Activated B cell treated with CpG ODN at 0.5 μM for 24 hours (primary cell): ENCODE measurements at regions of chr1 and their contacts with region 1.

Region 1: GRCh38 chr1:3618881-3619671 is 5.7 kb upstream of the TPRG1L start:
- DNase-seq: peak; percentile 51
- ATAC-seq: peak; percentile 96
- H3K4me3 Mint-ChIP-seq: peak overlapping the region; percentile 73
- H3K27ac Mint-ChIP-seq: no peak overlapping the region
- H3K4me1 Mint-ChIP-seq: peaks cover 38% of the 10 kb centered on the region
- H3K27me3 Mint-ChIP-seq: peaks cover under 1% of the 10 kb centered on the region
- CTCF ChIP-seq: no peak

Region 2: GRCh38 chr1:3453203-3453761 is 165.8 kb before region 1 on chr1:
- CTCF ChIA-PET with region 1: interaction called, 46 read pairs
- POLR2A ChIA-PET with region 1: interaction called, 5 read pairs
- intact Hi-C with region 1: loop called (anchors 1 kb)
- DNase-seq: peak; percentile 73
- ATAC-seq: peak; percentile 81
- H3K4me3 Mint-ChIP-seq: peak overlapping the region; percentile 41
- H3K27ac Mint-ChIP-seq: no peak overlapping the region
- H3K4me1 Mint-ChIP-seq: peaks cover 2% of the 10 kb centered on the region
- H3K27me3 Mint-ChIP-seq: peaks cover 19% of the 10 kb centered on the region
- CTCF ChIP-seq: peak; percentile 46

Region 3: DNA sequence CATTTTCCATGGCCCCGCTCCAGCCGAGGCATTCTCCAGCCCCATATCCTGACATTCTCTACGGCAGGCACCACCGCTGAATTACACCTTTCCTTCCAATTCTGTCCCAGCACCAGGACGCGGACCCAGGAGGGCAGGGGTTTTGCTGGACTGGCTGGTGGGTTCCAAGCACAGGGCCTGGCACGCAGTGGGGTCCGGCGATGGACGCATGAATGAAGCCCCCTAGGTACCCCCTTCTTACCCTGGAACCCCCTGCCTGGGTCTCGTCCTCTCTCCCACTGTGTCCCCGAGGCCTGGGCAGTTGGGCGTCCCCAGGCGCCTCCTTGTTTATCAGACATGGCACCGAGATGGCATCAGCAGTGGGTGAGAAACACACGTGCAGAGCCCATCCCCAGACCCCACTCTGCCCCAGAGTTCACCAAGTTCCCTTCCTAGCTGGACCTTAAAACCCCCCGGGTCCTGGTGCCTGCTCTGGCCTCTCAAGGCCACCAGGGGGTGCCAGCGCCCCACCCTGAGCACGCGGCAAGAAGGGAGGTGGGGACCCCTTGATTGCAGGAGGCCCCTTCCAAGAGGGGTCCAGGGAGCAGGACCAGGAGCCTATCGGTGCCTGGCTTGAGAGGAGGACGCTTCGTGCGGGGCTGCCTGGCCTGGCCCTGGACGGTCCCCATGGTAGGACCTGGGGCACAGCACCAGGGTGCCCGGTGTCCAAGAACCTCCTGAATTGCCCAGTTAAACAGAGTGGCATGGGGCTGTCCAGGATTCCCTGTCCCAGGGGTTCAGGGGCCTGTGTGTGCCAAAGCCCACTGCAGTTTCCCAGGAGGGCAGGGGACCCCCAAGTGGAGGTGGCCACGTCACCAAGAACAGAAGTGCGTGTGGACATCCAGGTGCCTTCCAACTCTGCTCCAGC is 53.9 kb before region 1 on chr1:
- CTCF ChIA-PET with region 1: interaction called, 45 read pairs
- POLR2A ChIA-PET with region 1: no interaction called
- intact Hi-C with region 1: loop called (anchors 1 kb)
- DNase-seq: peak; percentile 40
- ATAC-seq: peak; percentile 57
- H3K4me3 Mint-ChIP-seq: no peak overlapping the region
- H3K27ac Mint-ChIP-seq: no peak overlapping the region
- H3K4me1 Mint-ChIP-seq: no peaks in the 10 kb centered on the region
- H3K27me3 Mint-ChIP-seq: peaks cover 3% of the 10 kb centered on the region
- CTCF ChIP-seq: no peak

Region 4: GRCh38 chr1:3630161-3630611 is 11.1 kb after region 1 on chr1:
- CTCF ChIA-PET with region 1: interaction called, 18 read pairs
- POLR2A ChIA-PET with region 1: no interaction called
- intact Hi-C with region 1: no loop called
- DNase-seq: no peak
- ATAC-seq: no peak
- H3K4me3 Mint-ChIP-seq: no peak overlapping the region
- H3K27ac Mint-ChIP-seq: peak overlapping the region; percentile 53
- H3K4me1 Mint-ChIP-seq: peaks cover 17% of the 10 kb centered on the region
- H3K27me3 Mint-ChIP-seq: no peaks in the 10 kb centered on the region
- CTCF ChIP-seq: no peak

Region 5: DNA sequence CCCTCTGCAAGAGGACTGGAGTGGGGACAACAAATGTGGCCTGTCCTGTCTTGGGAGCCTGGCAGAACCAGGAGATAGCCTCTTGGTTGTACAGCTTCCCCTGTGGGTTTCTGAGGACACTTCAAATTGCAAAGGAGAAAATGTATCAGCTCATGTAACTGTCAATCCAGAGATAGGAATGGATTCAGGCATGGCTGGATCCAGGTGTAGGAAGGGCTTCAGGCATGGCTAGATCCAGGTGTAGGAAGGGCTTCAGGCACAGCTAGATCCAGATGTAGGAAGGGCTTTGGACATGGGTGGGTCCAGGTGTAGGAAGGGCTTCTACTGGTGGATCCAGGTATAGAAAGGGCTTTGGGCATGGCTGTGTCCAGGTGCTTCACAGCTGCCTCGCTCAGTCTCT is 64.1 kb after region 1 on chr1:
- CTCF ChIA-PET with region 1: no interaction called
- POLR2A ChIA-PET with region 1: no interaction called
- intact Hi-C with region 1: no loop called
- DNase-seq: no peak
- ATAC-seq: no peak
- H3K4me3 Mint-ChIP-seq: no peak overlapping the region
- H3K27ac Mint-ChIP-seq: no peak overlapping the region
- H3K4me1 Mint-ChIP-seq: peaks cover 28% of the 10 kb centered on the region
- H3K27me3 Mint-ChIP-seq: peaks cover 2% of the 10 kb centered on the region
- CTCF ChIP-seq: no peak

Region 6: GRCh38 chr1:3727042-3727824 is 108.2 kb after region 1 on chr1:
- CTCF ChIA-PET with region 1: interaction called, 10 read pairs
- POLR2A ChIA-PET with region 1: no interaction called
- intact Hi-C with region 1: loop called (anchors 1 kb)
- DNase-seq: no peak
- ATAC-seq: peak; percentile 64
- H3K4me3 Mint-ChIP-seq: no peak overlapping the region
- H3K27ac Mint-ChIP-seq: no peak overlapping the region
- H3K4me1 Mint-ChIP-seq: peaks cover 4% of the 10 kb centered on the region
- H3K27me3 Mint-ChIP-seq: peaks cover 4% of the 10 kb centered on the region
- CTCF ChIP-seq: no peak